Right ventricle myocardium inferior (tissue), 1 donor: ENCODE measurements at regions of chr17 and their contacts with region 1.

Region 1: GRCh38 chr17:49548506-49549310 is 27.0 kb upstream of the NXPH3 start:
- DNase-seq: peak; percentile 46
- ATAC-seq: peak; percentile 69

Region 2: GRCh38 chr17:49101054-49101947 is 447.4 kb before region 1 on chr17:
- intact Hi-C with region 1: no loop called
- DNase-seq: no peak
- ATAC-seq: no peak

Region 3: DNA sequence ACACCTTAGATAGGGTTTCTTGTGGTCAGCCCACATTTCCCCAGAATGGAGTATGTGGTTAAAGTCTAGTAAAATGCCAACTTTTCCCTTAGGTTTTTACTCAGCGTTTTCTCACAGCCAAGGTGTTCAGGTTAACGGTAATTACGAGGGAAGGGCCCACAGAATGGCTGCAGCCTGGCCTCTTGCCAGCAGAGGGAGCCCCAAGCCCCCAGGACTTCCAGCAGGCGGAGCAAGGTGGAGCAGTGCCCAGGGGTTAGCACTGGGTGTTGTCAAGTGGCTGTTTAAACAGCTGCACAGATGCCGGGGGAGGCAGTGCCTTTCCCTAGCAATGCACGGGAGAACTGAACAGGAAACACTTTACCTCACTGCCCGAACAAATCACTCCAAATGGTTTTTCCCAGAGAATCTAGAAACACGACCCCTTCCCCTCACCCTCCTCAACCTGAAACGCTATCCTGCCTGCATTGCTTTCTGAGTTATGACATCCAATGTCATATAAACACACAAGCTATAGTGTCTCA is 140.7 kb before region 1 on chr17:
- intact Hi-C with region 1: loop called (anchors 2 kb)
- DNase-seq: peak; percentile 88
- ATAC-seq: peak; percentile 63

Region 4: DNA sequence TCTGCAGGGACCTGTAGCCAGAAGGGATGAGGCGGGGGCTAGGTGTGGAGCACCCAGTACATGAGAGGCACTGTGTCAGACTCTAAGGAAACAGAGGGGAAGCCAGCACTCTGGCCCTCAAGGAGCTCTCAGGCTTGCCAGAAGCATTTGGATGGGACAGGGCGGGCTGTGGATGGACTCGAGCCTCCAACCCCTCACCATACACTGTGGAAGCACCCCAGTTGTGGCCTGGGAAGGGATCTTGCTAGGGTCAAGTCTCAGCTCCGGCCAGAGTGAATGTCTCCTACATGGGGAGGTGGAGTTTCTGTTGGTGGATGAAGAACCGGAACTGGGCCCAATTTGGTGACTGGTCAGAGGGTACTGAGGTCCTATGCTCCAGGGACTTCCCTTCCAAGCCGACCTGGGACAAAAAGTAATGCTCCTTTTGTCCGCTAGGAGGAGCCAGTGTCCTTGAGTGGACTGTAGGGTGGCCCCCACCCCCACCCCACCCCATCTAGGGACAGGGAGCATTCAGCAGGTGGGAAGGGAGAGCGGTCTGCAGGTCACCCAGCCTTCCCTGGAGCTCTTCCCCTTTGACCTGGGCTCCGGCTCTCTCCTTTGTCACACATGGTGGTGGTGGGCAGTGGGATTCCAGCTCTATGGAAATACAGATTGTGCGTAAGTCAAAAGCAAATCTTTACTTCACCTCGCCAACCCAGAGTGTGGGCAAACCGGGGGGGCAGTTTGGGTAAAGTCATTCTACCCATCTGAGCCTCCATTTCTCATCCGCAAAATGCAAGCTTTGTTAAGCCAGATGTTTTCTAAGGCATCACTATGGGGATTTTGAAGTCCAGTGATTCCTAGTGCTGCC is 113.7 kb before region 1 on chr17:
- intact Hi-C with region 1: loop called (anchors 2 kb)
- DNase-seq: no peak
- ATAC-seq: no peak

Region 5: GRCh38 chr17:49567871-49568694 is 19.4 kb after region 1 on chr17:
- intact Hi-C with region 1: no loop called
- DNase-seq: peak; percentile 94
- ATAC-seq: peak; percentile 75

Region 6: DNA sequence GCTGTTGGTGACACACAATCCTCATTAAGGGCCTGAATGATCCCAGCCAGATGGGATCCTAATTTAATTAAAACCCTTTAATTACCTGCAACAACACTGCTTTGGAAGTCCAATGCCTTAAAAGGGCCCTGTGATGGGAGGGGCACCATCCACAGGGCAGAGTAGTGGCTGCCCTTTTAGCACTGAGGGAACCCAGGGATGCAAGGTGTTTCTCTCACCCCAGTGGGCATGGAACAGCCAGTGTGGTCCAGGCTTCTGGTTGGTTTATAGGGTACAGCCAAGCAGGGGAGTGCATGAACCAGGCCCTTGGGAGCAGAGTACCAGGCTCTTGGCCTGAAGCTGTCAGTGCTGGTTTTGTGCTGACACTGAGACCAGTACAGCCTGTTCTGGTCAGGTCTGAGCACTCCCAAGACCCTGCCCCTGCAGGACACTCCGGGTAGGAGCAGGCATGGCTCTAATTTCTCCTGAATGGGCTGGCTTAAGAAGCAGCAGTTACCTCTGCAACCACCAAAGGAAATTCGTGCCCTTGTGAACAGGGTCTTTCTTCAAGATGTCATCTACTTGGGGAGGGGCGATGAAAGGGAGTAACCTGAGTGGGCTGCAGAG is 36.8 kb after region 1 on chr17:
- intact Hi-C with region 1: no loop called
- DNase-seq: no peak
- ATAC-seq: no peak